PC-9 (cell line): ENCODE measurements at regions of chr12 and their contacts with region 1.

Region 1: DNA sequence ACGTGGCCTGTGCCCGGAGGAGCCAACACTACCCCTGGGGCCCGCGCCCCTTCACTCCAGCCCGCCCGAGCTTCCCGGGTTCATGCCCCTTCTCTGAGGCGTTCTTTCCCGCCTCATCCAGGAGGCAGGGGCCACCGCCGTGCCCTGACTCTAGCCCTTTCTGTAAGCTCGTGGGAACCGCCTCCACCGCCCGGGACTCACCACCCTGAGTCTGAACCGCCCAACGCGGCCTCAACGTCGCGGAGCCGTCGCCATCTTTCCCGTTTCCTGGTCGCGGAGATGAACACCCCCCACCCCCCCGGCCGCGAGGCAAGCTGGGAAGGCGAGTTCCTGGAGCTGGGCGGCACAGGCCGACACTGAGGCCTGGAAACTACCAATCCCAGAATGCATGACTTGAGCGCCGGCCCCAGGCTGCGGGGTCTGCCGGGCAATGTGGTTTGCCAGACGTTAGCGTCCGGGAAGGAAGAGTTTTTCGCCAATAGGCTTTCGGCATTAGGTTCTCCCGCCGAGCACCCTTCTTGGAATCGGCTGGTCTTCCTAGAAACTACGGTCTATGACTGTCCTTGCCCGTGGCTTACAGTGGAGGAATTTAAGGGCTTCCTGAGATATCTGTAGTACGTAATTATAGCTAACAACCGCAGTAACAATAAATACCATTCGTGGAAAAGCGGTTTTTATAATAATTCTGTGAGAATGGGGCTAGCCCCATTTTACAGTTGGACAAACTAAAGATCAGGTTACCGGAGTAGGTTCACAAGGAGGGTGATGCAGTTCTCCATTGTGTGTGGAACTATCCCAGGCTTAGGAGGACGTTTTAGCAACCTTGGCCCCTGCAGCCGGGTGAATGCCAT is at the start of gene DDX23:
- DNase-seq: peak; percentile 92 to 93
- H3K4me3 ChIP-seq: peak within 1 kb of the TSS; percentile 68
- H3K27ac ChIP-seq: peak within 1 kb of the TSS; percentile 45
- H3K4me1 ChIP-seq: peaks cover 19% of the 10 kb centered on the region
- H3K27me3 ChIP-seq: no peaks in the 10 kb centered on the region
- CTCF ChIP-seq: no peak
- total RNA-seq, gene DDX23: 91.4 and 108 TPM in 2 replicates

Region 2: GRCh38 chr12:47247433-47247832 is 1604.7 kb before region 1 on chr12:
- CTCF ChIA-PET with region 1: no interaction called
- POLR2A ChIA-PET with region 1: interaction called, 13 read pairs
- intact Hi-C with region 1: no loop called
- DNase-seq: peak; percentile 60 to 81
- H3K4me3 ChIP-seq: no peak overlapping the region
- H3K27ac ChIP-seq: peak overlapping the region; percentile 66
- H3K4me1 ChIP-seq: peaks cover 65% of the 10 kb centered on the region
- H3K27me3 ChIP-seq: no peaks in the 10 kb centered on the region
- CTCF ChIP-seq: no peak

Region 3: DNA sequence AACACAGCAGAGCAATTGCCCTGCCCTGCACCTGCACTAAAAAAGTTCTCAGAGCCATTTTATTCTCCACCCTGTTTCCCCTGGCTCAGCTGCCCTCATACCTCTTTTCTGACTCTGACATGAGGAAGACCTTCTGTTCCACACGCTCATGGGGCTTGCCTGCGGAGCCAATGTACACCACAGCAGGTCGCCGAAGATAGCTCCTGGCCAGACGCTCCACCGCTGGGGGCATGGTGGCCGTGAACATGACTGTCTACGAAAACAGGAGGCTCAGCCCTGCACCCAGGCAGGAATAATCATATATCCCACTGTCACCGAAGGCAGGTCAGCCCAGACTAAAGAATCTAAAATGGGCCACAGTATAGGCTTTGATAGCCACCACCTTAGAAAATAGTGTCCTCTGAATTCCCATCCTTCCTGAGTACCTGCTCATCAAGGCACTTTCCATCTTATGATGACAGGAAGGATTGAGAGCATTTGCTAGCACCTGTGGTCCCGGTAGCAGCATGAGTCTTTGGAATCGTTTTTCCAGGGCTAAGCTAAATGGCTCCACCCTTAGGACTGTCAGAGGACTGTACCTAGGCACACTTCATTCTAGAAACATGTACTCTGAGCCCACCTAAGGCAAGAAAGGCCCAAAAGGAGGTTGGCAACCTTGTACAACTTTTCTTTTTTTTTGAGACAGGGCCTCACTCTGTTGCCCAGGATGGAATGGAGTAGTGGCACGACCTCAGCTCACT is 19.6 kb before region 1 on chr12:
- CTCF ChIA-PET with region 1: no interaction called
- POLR2A ChIA-PET with region 1: interaction called, 11 read pairs
- intact Hi-C with region 1: no loop called
- DNase-seq: no peak
- H3K4me3 ChIP-seq: no peak overlapping the region
- H3K27ac ChIP-seq: no peak overlapping the region
- H3K4me1 ChIP-seq: no peaks in the 10 kb centered on the region
- H3K27me3 ChIP-seq: no peaks in the 10 kb centered on the region
- CTCF ChIP-seq: no peak

Region 4: DNA sequence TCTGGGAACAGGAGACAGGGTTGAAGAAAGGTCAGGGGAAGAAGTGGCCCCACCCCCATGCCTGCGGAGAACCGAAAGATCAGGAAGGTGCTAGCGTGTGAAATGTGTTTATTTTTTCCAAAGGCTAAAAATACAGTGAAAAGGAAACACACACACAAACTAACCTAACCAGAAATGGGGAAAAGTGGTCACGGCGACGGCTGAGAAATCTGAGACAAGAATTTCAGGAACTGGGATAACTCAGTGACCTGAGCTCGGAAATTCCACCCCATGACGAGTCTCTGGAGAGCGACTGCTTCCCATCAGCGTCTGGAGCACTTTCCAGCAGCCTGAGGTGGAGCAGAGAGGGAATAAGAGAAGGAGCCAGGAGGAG is 30.2 kb after region 1 on chr12:
- CTCF ChIA-PET with region 1: interaction called, 11 read pairs
- POLR2A ChIA-PET with region 1: interaction called, 5 read pairs
- intact Hi-C with region 1: no loop called
- DNase-seq: peak; percentile 45 to 52
- H3K4me3 ChIP-seq: peak overlapping the region; percentile 43; the same call in 1 of the 2 replicates
- H3K27ac ChIP-seq: peak overlapping the region; percentile 79
- H3K4me1 ChIP-seq: peaks cover 30% of the 10 kb centered on the region
- H3K27me3 ChIP-seq: no peaks in the 10 kb centered on the region
- CTCF ChIP-seq: no peak

Region 5: GRCh38 chr12:48924617-48925303 is 72.7 kb after region 1 on chr12:
- CTCF ChIA-PET with region 1: interaction called, 4 read pairs
- POLR2A ChIA-PET with region 1: interaction called, 13 read pairs
- intact Hi-C with region 1: no loop called
- DNase-seq: peak in 1 of 2 experiments; percentile 23
- H3K4me3 ChIP-seq: peak overlapping the region; percentile 53; the same call in 1 of the 2 replicates
- H3K27ac ChIP-seq: no peak overlapping the region
- H3K4me1 ChIP-seq: no peaks in the 10 kb centered on the region
- H3K27me3 ChIP-seq: no peaks in the 10 kb centered on the region
- CTCF ChIP-seq: peak; percentile 33; the same call in 1 of the 2 replicates

Region 6: DNA sequence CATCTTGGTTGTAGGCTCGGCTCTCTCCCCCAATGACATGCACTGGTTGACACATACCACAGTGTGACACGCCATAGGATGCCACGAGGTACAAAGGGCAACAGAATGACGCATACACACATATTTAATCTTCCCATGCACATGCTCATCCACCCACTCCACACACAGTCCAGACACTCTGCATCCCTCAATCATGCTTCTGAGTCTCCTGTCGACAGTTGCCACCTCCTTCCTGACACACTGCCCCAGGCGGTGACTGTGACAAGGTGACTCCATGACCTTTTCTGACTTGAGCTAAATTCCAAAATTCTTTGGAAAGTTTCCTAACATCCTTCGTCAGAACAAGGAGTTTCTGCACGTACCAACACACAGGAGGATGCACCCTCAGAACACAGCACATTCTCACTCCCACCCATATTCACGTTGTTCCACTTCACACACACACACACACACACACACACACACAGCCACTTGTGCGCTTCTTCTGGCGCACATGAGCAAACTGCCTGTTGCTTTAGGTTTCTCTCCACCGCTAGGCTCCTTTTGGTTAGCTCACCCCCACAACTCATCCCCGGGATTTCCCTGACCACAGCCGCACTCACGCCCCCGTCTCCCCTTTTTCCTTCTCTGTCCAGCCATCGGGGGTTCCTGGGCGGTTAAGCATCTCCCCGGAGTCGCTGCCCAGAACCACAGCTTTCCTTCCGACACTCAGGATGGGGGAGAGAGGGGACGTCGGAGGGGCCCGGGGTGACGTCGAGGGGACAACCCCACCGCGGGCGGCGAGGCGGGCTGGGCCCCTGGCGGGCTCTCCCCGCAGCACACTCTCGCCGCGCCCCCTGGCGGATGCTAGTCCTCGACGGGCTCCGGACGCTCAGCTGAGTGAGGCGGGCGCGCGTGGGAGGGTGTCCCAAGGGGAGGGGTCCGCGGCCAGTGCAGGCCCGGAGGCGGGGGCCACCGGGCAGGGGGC is 125.5 kb after region 1 on chr12:
- CTCF ChIA-PET with region 1: no interaction called
- POLR2A ChIA-PET with region 1: interaction called, 10 read pairs
- intact Hi-C with region 1: loop called (anchors 5 kb)
- DNase-seq: no peak
- H3K4me3 ChIP-seq: no peak overlapping the region
- H3K27ac ChIP-seq: no peak overlapping the region
- H3K4me1 ChIP-seq: no peaks in the 10 kb centered on the region
- H3K27me3 ChIP-seq: peaks cover 39% of the 10 kb centered on the region
- CTCF ChIP-seq: peak; percentile 63

Region 7: GRCh38 chr12:49740930-49741881 is 889.1 kb after region 1 on chr12 and contains the start of gene TMBIM6:
- CTCF ChIA-PET with region 1: interaction called, 13 read pairs
- POLR2A ChIA-PET with region 1: no interaction called
- intact Hi-C with region 1: no loop called
- DNase-seq: peak; percentile 98 to 99
- H3K4me3 ChIP-seq: peak within 1 kb of the TSS; percentile 96
- H3K27ac ChIP-seq: peak within 1 kb of the TSS; percentile 87
- H3K4me1 ChIP-seq: peaks cover 20% of the 10 kb centered on the region
- H3K27me3 ChIP-seq: no peaks in the 10 kb centered on the region
- CTCF ChIP-seq: peak; percentile 92
- total RNA-seq, gene TMBIM6: 685 and 690 TPM in 2 replicates